ENCODE measurements at regions of chr2 and their contacts with region 1.

Region 1: GRCh38 chr2:113138428-113139322 is 11.3 kb downstream of the IL1RN start:
- DNase-seq: peak; percentile 64
- ATAC-seq: peak; percentile 91
- H3K4me3 ChIP-seq: no peak overlapping the region
- H3K27ac ChIP-seq: no peak overlapping the region
- H3K4me1 ChIP-seq: peaks cover 4% of the 10 kb centered on the region; the same call in 1 of the 2 replicates
- H3K27me3 ChIP-seq: no peaks in the 10 kb centered on the region
- CTCF ChIP-seq: peak; percentile 66 to 77 (median 76)
- EP300 ChIP-seq: no peak
- POLR2A ChIP-seq: no peak
- RAD21 ChIP-seq: peak; percentile 71

Region 2: GRCh38 chr2:113061901-113062430 is 76.7 kb before region 1 on chr2:
- CTCF ChIA-PET with region 1: no interaction called
- POLR2A ChIA-PET with region 1: no interaction called
- RAD21 ChIA-PET with region 1: no interaction called
- SMC1A ChIA-PET with region 1: no interaction called
- in situ Hi-C with region 1: no loop called
- intact Hi-C with region 1: no loop called
- DNase-seq: no peak
- ATAC-seq: no peak
- H3K4me3 ChIP-seq: no peak overlapping the region
- H3K27ac ChIP-seq: no peak overlapping the region
- H3K4me1 ChIP-seq: no peaks in the 10 kb centered on the region
- H3K27me3 ChIP-seq: no peaks in the 10 kb centered on the region
- CTCF ChIP-seq: no peak
- EP300 ChIP-seq: no peak
- POLR2A ChIP-seq: no peak
- RAD21 ChIP-seq: no peak

Region 3: GRCh38 chr2:113124181-113124961 is 14.3 kb before region 1 on chr2:
- CTCF ChIA-PET with region 1: interaction called, 28 read pairs
- POLR2A ChIA-PET with region 1: interaction called, 3 read pairs
- RAD21 ChIA-PET with region 1: interaction called, 3 read pairs
- SMC1A ChIA-PET with region 1: interaction called, 8 read pairs
- in situ Hi-C with region 1: no loop called
- intact Hi-C with region 1: no loop called
- DNase-seq: peak; percentile 38
- ATAC-seq: peak; percentile 78
- H3K4me3 ChIP-seq: peak overlapping the region; percentile 9; the same call in 1 of the 2 replicates
- H3K27ac ChIP-seq: peak overlapping the region; percentile 6; the same call in 1 of the 2 replicates
- H3K4me1 ChIP-seq: peaks cover 11% of the 10 kb centered on the region
- H3K27me3 ChIP-seq: no peaks in the 10 kb centered on the region
- CTCF ChIP-seq: no peak
- EP300 ChIP-seq: no peak
- POLR2A ChIP-seq: no peak
- RAD21 ChIP-seq: no peak

Region 4: GRCh38 chr2:113173542-113174395 is 35.1 kb after region 1 on chr2 and contains the start of gene PSD4:
- CTCF ChIA-PET with region 1: interaction called, 195 read pairs
- POLR2A ChIA-PET with region 1: interaction called, 4 read pairs
- RAD21 ChIA-PET with region 1: interaction called, 75 read pairs
- SMC1A ChIA-PET with region 1: interaction called, 52 read pairs
- in situ Hi-C with region 1: no loop called
- intact Hi-C with region 1: loop called (anchors 1 kb)
- DNase-seq: peak; percentile 67
- ATAC-seq: peak; percentile 87
- H3K4me3 ChIP-seq: peak within 1 kb of the TSS; percentile 95
- H3K27ac ChIP-seq: peak within 1 kb of the TSS; percentile 96
- H3K4me1 ChIP-seq: peaks cover 32% of the 10 kb centered on the region
- H3K27me3 ChIP-seq: no peaks in the 10 kb centered on the region
- CTCF ChIP-seq: 0 out of 6 replicates have a peak, but pooled peaks of 1 of the 3 experiments have one; percentile 12
- EP300 ChIP-seq: no peak
- POLR2A ChIP-seq: peak; percentile 96
- RAD21 ChIP-seq: no peak
- polyA plus RNA-seq, gene PSD4: 0.68 to 1.7 TPM

Region 5: GRCh38 chr2:113198790-113199612 is 60.3 kb after region 1 on chr2:
- CTCF ChIA-PET with region 1: interaction called, 105 read pairs
- POLR2A ChIA-PET with region 1: interaction called, 6 read pairs
- RAD21 ChIA-PET with region 1: interaction called, 37 read pairs
- SMC1A ChIA-PET with region 1: interaction called, 43 read pairs
- in situ Hi-C with region 1: no loop called
- intact Hi-C with region 1: loop called (anchors 1 kb)
- DNase-seq: no peak
- ATAC-seq: peak; percentile 89
- H3K4me3 ChIP-seq: no peak overlapping the region
- H3K27ac ChIP-seq: no peak overlapping the region
- H3K4me1 ChIP-seq: no peaks in the 10 kb centered on the region
- H3K27me3 ChIP-seq: no peaks in the 10 kb centered on the region
- CTCF ChIP-seq: peak; percentile 54 to 80 (median 75)
- EP300 ChIP-seq: no peak
- POLR2A ChIP-seq: no peak
- RAD21 ChIP-seq: peak; percentile 40

Region 6: DNA sequence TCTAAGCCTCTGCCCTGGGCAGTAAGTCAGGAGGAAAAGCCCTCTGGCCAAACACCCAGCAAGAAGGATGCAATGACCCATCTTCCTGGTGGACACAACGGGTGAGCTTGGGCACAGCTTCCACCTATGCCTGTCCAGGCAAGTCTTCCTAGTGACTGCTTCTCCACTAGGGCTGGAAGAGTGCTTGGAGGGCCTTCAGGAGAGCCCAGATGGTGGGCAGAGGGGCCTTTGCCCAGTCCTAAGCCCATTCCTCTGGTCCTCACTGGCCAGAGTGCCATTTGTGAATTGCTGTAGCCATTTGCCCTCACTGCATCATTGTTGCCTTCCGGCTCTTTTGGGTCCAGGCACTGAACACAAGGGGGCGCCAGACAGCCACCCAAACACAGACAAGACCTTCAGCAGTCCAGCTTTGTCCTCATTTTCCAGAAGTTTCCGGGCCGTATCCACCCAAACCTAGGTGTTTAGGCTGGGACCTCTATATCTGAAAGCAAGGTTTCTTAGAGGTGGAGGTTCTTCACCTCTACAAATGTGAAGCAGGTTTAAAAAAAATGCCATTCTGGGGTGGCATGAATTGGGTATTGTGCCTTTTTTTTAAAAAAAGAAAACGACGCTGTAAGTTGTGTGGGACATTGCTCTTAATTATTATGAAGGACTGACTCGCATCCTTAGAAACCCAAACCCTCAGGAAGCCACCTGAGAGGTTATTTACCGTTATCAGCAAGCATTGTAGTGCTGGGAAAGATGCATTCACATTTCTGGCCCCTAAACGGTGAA is 110.5 kb after region 1 on chr2:
- CTCF ChIA-PET with region 1: interaction called, 39 read pairs
- POLR2A ChIA-PET with region 1: interaction called, 3 read pairs
- RAD21 ChIA-PET with region 1: interaction called, 6 read pairs
- SMC1A ChIA-PET with region 1: interaction called, 7 read pairs
- in situ Hi-C with region 1: no loop called
- intact Hi-C with region 1: no loop called
- DNase-seq: peak; percentile 23
- ATAC-seq: peak; percentile 95
- H3K4me3 ChIP-seq: no peak overlapping the region
- H3K27ac ChIP-seq: no peak overlapping the region
- H3K4me1 ChIP-seq: peaks cover 8% of the 10 kb centered on the region; the same call in 1 of the 2 replicates
- H3K27me3 ChIP-seq: no peaks in the 10 kb centered on the region
- CTCF ChIP-seq: peak; percentile 90 to 93 (median 92)
- EP300 ChIP-seq: no peak
- POLR2A ChIP-seq: no peak
- RAD21 ChIP-seq: peak; percentile 86

Region 7: GRCh38 chr2:113328043-113328442 is 189.4 kb after region 1 on chr2:
- CTCF ChIA-PET with region 1: no interaction called
- POLR2A ChIA-PET with region 1: no interaction called
- RAD21 ChIA-PET with region 1: no interaction called
- SMC1A ChIA-PET with region 1: no interaction called
- in situ Hi-C with region 1: no loop called
- intact Hi-C with region 1: no loop called
- DNase-seq: no peak
- ATAC-seq: no peak
- H3K4me3 ChIP-seq: no peak overlapping the region
- H3K27ac ChIP-seq: no peak overlapping the region
- H3K4me1 ChIP-seq: no peaks in the 10 kb centered on the region
- H3K27me3 ChIP-seq: peaks cover 1 to 3% of the 10 kb centered on the region in 2 experiments; a peak in 1 of 4 replicates
- CTCF ChIP-seq: no peak
- EP300 ChIP-seq: no peak
- POLR2A ChIP-seq: no peak
- RAD21 ChIP-seq: no peak

Region 8: GRCh38 chr2:113734185-113734584 is 595.5 kb after region 1 on chr2:
- CTCF ChIA-PET with region 1: no interaction called
- POLR2A ChIA-PET with region 1: no interaction called
- RAD21 ChIA-PET with region 1: no interaction called
- SMC1A ChIA-PET with region 1: no interaction called
- in situ Hi-C with region 1: no loop called
- intact Hi-C with region 1: no loop called
- DNase-seq: peak; percentile 12
- ATAC-seq: peak; percentile 89
- H3K4me3 ChIP-seq: no peak overlapping the region
- H3K27ac ChIP-seq: no peak overlapping the region
- H3K4me1 ChIP-seq: no peaks in the 10 kb centered on the region
- H3K27me3 ChIP-seq: no peaks in the 10 kb centered on the region
- CTCF ChIP-seq: no peak
- EP300 ChIP-seq: no peak
- POLR2A ChIP-seq: no peak
- RAD21 ChIP-seq: no peak

Measured in GM12878 (cell line).